BJ (cell line): ENCODE measurements at regions of chr4 and their contacts with region 1.

Region 1: DNA sequence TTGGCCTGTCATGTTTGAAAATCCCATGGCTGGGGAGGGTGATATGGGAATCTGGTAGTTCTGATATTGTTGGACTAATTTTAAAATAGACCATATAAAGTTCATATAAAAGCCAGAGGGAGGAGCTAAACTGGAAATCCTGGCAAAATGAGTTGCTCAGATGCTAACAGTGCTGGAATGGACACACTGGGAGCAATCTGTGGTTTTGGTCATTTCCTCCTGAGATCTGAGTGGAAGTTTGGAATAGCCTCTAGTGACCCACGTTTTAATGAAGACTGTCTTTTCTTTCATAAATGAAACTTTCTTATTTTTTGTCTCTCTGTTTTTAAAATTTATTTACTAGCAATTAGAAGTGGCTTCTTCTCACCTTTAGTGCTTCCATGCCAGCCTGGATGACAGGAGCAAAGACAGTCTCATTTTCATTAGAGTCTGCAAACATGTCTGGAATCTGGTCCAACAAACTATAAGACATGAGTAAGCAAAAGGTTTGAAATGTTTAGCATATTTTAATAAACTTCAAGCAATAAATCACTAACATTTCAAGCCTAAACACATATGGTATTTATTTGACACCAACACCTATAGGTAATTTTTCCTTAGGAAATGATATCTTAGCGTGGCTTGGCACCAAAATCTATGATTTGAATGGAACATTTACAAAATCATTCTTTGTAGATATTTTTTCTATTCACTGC is 66.6 kb downstream of the METTL14 start:
- DNase-seq: peak; percentile 58
- H3K4me3 ChIP-seq: no peak overlapping the region
- H3K27me3 ChIP-seq: no peaks in the 10 kb centered on the region
- CTCF ChIP-seq: no peak

Region 2: DNA sequence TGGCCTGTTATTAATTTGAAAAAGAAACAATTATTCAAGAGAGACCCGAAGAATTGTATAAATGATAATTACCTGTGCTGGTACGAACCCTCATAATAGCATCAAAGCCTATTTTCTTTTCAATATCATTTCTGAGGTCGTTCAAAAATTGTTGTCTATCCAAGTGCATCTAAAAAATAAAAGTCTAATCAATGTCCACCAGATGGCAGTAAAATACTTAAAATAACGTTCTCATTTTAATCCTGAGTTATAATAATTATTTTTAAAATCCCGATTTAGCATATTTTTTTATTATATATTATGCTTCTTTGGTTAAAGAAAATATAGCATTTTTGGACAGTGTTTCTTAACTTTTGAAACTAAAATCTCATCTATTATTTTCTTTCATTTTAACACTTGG is 10.9 kb before region 1 on chr4:
- CTCF ChIA-PET with region 1: interaction called, 11 read pairs
- POLR2A ChIA-PET with region 1: no interaction called
- DNase-seq: no peak
- H3K4me3 ChIP-seq: no peak overlapping the region
- H3K27me3 ChIP-seq: no peaks in the 10 kb centered on the region
- CTCF ChIP-seq: peak; percentile 25; the same call in 1 of the 2 replicates

Region 3: GRCh38 chr4:118772081-118772766 is 20.4 kb after region 1 on chr4:
- CTCF ChIA-PET with region 1: interaction called, 15 read pairs
- POLR2A ChIA-PET with region 1: no interaction called
- DNase-seq: no peak
- H3K4me3 ChIP-seq: no peak overlapping the region
- H3K27me3 ChIP-seq: no peaks in the 10 kb centered on the region
- CTCF ChIP-seq: peak; percentile 46

Region 4: DNA sequence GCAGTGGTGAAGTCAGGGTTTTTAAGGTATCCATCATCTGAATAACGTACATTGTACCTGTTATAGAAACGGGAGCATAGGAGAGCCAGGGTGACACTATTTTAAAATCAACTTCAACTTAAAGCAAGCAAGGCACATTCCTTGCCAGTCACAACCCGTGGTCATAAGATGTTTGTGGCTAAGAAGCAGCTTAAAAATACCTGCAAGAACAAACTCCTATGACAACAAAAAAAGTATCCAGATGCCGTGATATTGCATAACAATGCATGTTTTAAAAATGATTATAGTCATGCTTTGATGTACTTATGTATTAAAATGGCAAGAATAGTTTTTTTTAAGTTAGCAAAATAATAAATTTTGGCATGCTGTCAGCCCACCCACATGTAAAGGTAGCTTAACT is 120.4 kb after region 1 on chr4:
- CTCF ChIA-PET with region 1: no interaction called
- POLR2A ChIA-PET with region 1: no interaction called
- DNase-seq: no peak
- H3K4me3 ChIP-seq: no peak overlapping the region
- H3K27me3 ChIP-seq: no peaks in the 10 kb centered on the region
- CTCF ChIP-seq: no peak